ENCODE measurements at regions of chr12 and their contacts with region 1.

Region 1: GRCh38 chr12:62983599-62984022 is 48.7 kb upstream of the PPM1H start:
- DNase-seq: peak; percentile 57
- ATAC-seq: peak; percentile 91
- H3K4me3 ChIP-seq: no peak overlapping the region
- H3K27ac ChIP-seq: no peak overlapping the region
- H3K4me1 ChIP-seq: peaks cover 15% of the 10 kb centered on the region
- H3K27me3 ChIP-seq: peaks cover 0 to 1% of the 10 kb centered on the region in 2 experiments; a peak in 1 of 5 replicates
- CTCF ChIP-seq: peak; percentile 71
- EP300 ChIP-seq: no peak
- POLR2A ChIP-seq: no peak
- RAD21 ChIP-seq: peak; percentile 59; the same call in 1 of the 2 replicates

Region 2: GRCh38 chr12:62758216-62758615 is 225.4 kb before region 1 on chr12:
- CTCF ChIA-PET with region 1: no interaction called
- POLR2A ChIA-PET with region 1: no interaction called
- in situ Hi-C with region 1: no loop called
- intact Hi-C with region 1: no loop called
- DNase-seq: no peak
- ATAC-seq: no peak
- H3K4me3 ChIP-seq: no peak overlapping the region
- H3K27ac ChIP-seq: no peak overlapping the region
- H3K4me1 ChIP-seq: peaks cover 47% of the 10 kb centered on the region
- H3K27me3 ChIP-seq: no peaks in the 10 kb centered on the region
- CTCF ChIP-seq: no peak
- EP300 ChIP-seq: no peak
- POLR2A ChIP-seq: no peak
- RAD21 ChIP-seq: no peak

Region 3: DNA sequence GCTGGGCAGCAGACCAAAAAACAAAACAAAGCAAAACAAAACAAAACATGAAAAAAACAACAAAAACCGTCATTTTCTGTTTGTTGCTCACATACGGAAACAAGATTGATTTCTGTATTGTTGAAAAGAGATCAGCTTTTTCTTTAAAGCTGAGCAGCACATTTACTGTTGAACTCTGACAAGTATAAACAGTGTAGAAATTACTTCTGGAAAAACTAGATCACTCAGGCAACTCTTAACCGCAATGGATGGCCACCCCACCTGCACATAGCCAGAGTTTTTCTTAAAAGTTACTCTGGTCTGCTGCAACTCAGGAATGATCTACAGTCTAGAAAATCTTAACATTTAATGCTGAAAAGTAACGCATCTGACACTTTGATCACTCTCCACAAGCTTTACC is 129.6 kb before region 1 on chr12:
- CTCF ChIA-PET with region 1: no interaction called
- POLR2A ChIA-PET with region 1: no interaction called
- in situ Hi-C with region 1: no loop called
- intact Hi-C with region 1: loop called (anchors 5 kb)
- DNase-seq: no peak
- ATAC-seq: no peak
- H3K4me3 ChIP-seq: no peak overlapping the region
- H3K27ac ChIP-seq: no peak overlapping the region
- H3K4me1 ChIP-seq: peaks cover 19% of the 10 kb centered on the region
- H3K27me3 ChIP-seq: no peaks in the 10 kb centered on the region
- CTCF ChIP-seq: no peak
- EP300 ChIP-seq: no peak
- POLR2A ChIP-seq: no peak
- RAD21 ChIP-seq: no peak